Activated B cell treated with CpG ODN at 0.5 μM for 24 hours (primary cell): ENCODE measurements at regions of chr3 and their contacts with region 1.

Region 1: DNA sequence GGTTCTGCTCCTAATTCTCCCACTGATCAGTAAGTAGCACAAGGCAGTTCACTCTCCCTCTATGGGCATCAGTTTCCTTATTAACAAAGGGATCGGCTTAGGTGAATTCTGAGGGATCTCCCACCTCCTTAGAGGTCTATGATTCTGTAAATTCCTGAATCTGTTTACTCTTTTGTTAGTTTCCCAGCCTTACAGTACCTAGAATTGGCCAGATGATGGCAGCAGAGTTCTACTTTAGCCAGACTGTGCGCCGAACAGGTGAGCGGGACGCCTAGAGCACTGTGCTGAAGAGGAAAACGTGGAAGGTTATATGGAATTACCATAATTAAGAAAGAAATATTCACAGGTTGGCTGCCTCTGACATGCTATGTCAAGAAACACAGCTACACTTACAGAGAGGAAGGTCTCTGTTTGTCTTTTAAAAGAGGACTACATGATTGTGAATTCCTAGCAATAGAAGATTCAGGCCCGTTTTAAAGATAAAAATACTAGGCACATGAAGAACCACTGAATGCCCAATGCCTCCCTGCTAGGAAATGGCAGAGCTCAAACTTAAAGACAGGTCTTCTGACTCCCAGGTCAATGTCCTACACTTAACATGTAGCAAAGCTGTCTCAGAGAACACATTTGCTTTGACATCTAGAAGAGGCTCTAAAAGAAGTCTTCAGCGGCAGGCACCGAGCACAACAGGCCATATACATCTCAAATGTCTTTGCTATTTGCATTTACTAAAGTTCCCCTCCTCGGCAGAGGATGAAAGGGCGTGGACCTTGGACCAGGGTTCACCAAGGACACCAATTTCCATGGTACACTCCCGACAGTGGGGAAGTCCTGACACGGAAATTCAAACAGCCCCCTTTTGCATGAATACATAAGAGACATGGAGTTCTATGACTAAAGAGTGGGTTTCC is 259.9 kb downstream of the FGF12 start:
- DNase-seq: no peak
- ATAC-seq: peak; percentile 81
- H3K4me3 Mint-ChIP-seq: no peak overlapping the region
- H3K27ac Mint-ChIP-seq: no peak overlapping the region
- H3K4me1 Mint-ChIP-seq: no peaks in the 10 kb centered on the region
- H3K27me3 Mint-ChIP-seq: peaks cover 24% of the 10 kb centered on the region
- CTCF ChIP-seq: peak; percentile 90

Region 2: DNA sequence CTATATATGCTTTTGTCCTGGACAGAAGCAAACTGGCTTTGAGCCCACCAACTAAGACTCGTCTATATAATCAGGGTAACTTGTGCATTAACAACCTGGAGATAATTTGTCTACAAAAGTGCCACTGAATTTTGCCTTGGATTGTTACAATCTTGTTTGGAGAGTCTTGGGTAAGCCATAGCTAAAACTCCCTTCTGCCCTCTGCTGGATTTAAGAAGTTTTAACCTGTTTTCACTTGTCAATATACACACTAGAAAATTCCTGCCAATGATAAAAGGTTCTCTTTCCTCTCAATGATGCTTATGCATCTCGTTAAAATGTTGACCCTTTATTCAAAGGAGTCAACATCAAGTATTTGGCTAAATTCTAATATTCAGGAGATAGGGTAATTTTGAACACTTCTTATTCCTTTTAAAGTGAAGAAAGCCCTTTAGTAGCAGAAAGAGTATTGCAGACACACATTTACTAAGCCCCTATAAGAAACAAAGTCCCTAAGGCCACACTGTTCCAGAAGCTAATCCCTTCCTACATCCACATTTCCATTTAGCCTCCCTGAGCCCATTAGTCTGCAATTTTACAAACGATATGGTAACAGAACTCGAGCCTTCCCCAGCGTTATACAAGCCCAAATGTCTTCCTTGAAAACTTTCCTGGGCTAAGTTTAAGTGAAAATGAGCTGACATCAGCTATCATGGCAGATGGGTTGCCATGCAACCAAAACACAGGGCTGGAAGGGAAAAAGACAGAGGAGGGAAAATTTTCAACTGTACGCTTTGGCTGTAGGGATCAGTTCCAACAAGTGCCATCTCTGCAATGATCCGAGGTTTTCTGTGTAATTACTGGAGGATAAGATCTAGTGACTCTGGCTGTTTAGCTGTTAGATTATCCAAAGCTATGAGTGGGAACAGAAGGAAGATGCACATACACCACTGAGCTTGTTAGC is 335.7 kb after region 1 on chr3:
- CTCF ChIA-PET with region 1: interaction called, 16 read pairs
- POLR2A ChIA-PET with region 1: no interaction called
- intact Hi-C with region 1: loop called (anchors 1 kb)
- DNase-seq: no peak
- ATAC-seq: no peak
- H3K4me3 Mint-ChIP-seq: no peak overlapping the region
- H3K27ac Mint-ChIP-seq: no peak overlapping the region
- H3K4me1 Mint-ChIP-seq: no peaks in the 10 kb centered on the region
- H3K27me3 Mint-ChIP-seq: no peaks in the 10 kb centered on the region
- CTCF ChIP-seq: no peak

Region 3: GRCh38 chr3:193465992-193466608 is 998.6 kb after region 1 on chr3:
- CTCF ChIA-PET with region 1: no interaction called
- POLR2A ChIA-PET with region 1: no interaction called
- intact Hi-C with region 1: loop called (anchors 1 kb)
- DNase-seq: no peak
- ATAC-seq: no peak
- H3K4me3 Mint-ChIP-seq: no peak overlapping the region
- H3K27ac Mint-ChIP-seq: no peak overlapping the region
- H3K4me1 Mint-ChIP-seq: no peaks in the 10 kb centered on the region
- H3K27me3 Mint-ChIP-seq: peaks cover 1% of the 10 kb centered on the region
- CTCF ChIP-seq: no peak

Region 4: GRCh38 chr3:193605876-193606275 is 1138.4 kb after region 1 on chr3:
- CTCF ChIA-PET with region 1: no interaction called
- POLR2A ChIA-PET with region 1: no interaction called
- intact Hi-C with region 1: loop called (anchors 1 kb)
- DNase-seq: no peak
- ATAC-seq: peak; percentile 68
- H3K4me3 Mint-ChIP-seq: no peak overlapping the region
- H3K27ac Mint-ChIP-seq: no peak overlapping the region
- H3K4me1 Mint-ChIP-seq: peaks cover 31% of the 10 kb centered on the region
- H3K27me3 Mint-ChIP-seq: no peaks in the 10 kb centered on the region
- CTCF ChIP-seq: no peak